Ovary (tissue), 10 donors: ENCODE measurements at regions of chr6 and their contacts with region 1.

Region 1: GRCh38 chr6:36131511-36132245 is 1.4 kb downstream of the MAPK13 start:
- DNase-seq: peak; percentile 40 to 80 (median 77)
- H3K4me3 ChIP-seq: peak overlapping the region; percentile 37
- H3K27ac ChIP-seq: no peak overlapping the region
- H3K4me1 ChIP-seq: peaks cover 14% of the 10 kb centered on the region
- H3K27me3 ChIP-seq: no peaks in the 10 kb centered on the region
- CTCF ChIP-seq: no peak
- EP300 ChIP-seq: no peak
- POLR2A ChIP-seq: no peak

Region 2: DNA sequence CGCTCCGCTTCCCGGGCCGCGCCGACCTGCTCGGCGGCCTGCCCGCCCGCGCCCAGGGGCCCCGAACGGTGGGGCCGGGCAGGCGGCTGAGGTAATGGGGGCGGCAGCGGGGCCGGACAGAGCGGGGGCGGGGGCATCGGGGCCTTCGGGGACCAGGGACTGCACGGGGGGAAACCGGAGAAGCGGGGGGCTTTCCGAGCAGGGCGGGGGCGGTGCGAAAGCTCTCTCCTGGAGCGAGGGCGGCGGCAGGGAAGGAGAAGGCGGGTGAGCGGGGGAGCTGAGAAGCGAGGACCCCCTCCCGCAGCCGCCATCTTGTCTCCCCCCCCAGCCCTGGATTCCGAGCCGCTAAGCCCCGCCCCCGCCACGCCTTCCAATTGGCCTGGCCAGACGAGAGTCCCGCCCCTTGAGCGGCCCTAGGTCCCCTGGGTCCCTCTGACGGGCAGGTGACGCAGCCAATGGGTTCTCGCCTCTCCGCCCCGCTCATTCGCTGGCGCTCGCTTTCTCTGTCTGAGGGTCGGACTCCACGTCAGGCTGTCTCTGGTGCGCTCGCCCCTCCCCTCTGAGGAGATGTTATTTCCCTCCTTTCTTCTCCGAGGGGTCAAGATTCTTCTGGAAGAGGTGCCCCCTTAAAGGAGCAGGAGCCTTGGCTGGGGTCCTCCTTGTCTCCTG is 65.3 kb after region 1 on chr6:
- intact Hi-C with region 1: loop called in 1 of 4 experiments (anchors 10 kb)
- DNase-seq: peak; percentile 99 to 100 (median 100)
- H3K4me3 ChIP-seq: peak overlapping the region; percentile 61
- H3K27ac ChIP-seq: peak overlapping the region; percentile 86 to 97
- H3K4me1 ChIP-seq: peaks cover 15% of the 10 kb centered on the region
- H3K27me3 ChIP-seq: no peaks in the 10 kb centered on the region
- CTCF ChIP-seq: no peak
- EP300 ChIP-seq: no peak
- POLR2A ChIP-seq: peak; percentile 70